PC-3 (cell line): ENCODE measurements at regions of chr6 and their contacts with region 1.

Region 1: DNA sequence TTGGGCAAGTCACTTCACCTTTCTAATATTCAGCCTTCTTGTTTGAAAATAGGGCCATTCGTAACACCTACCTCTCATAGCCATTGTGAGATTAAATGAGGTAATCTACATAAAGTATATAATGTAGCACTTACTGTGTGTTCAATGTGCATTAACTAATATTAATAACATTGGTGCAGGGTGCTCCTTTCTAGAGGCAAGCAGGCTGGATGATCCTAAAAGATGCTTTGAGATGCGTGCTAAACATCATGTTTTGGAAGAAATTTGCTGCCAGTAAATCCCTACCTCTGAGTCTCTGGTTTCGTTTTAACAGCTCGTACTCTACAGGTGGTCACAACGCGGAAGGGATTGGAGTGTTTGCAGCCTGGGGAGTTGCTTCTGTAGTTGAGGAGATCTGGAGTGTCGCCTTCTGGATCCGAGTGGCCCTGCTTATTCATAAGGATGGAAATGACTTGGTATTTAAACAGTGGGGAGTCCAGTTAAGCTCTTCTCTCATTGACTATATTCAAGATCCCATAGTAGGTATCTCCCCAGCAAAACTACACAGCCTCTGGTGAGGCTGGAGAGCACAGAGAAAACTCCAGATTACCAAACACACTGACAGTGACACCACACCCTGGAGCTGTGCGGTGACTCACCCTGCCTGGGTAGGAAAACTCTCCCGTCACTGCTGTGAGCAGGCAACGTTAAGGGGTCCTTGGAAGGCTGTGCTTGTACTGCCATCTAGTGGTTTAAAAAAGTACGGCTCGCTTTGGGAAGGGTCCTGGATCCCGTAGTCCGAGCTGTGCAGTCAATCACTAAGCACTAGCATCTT is 107.9 kb downstream of the MAP3K7 start:
- DNase-seq: peak; percentile 94
- ATAC-seq: peak; percentile 99
- H3K4me3 ChIP-seq: no peak overlapping the region
- H3K27ac ChIP-seq: peak overlapping the region; percentile 48
- H3K4me1 ChIP-seq: peaks cover 13% of the 10 kb centered on the region
- H3K27me3 ChIP-seq: no peaks in the 10 kb centered on the region
- CTCF ChIP-seq: peak; percentile 82

Region 2: GRCh38 chr6:89940225-89941027 is 538.6 kb before region 1 on chr6:
- CTCF ChIA-PET with region 1: interaction called, 25 read pairs
- POLR2A ChIA-PET with region 1: no interaction called
- intact Hi-C with region 1: loop called (anchors 1 kb)
- DNase-seq: peak; percentile 78
- ATAC-seq: peak; percentile 83
- H3K4me3 ChIP-seq: no peak overlapping the region
- H3K27ac ChIP-seq: no peak overlapping the region
- H3K4me1 ChIP-seq: peaks cover 13% of the 10 kb centered on the region
- H3K27me3 ChIP-seq: no peaks in the 10 kb centered on the region
- CTCF ChIP-seq: peak; percentile 75

Region 3: GRCh38 chr6:89977808-89978748 is 500.9 kb before region 1 on chr6:
- CTCF ChIA-PET with region 1: interaction called, 17 read pairs
- POLR2A ChIA-PET with region 1: no interaction called
- intact Hi-C with region 1: no loop called
- DNase-seq: no peak
- ATAC-seq: no peak
- H3K4me3 ChIP-seq: no peak overlapping the region
- H3K27ac ChIP-seq: no peak overlapping the region
- H3K4me1 ChIP-seq: no peaks in the 10 kb centered on the region
- H3K27me3 ChIP-seq: no peaks in the 10 kb centered on the region
- CTCF ChIP-seq: no peak

Region 4: GRCh38 chr6:90216072-90216977 is 262.7 kb before region 1 on chr6:
- CTCF ChIA-PET with region 1: no interaction called
- POLR2A ChIA-PET with region 1: no interaction called
- intact Hi-C with region 1: loop called (anchors 5 kb)
- DNase-seq: no peak
- ATAC-seq: no peak
- H3K4me3 ChIP-seq: no peak overlapping the region
- H3K27ac ChIP-seq: no peak overlapping the region
- H3K4me1 ChIP-seq: peaks cover 52% of the 10 kb centered on the region
- H3K27me3 ChIP-seq: no peaks in the 10 kb centered on the region
- CTCF ChIP-seq: no peak

Region 5: DNA sequence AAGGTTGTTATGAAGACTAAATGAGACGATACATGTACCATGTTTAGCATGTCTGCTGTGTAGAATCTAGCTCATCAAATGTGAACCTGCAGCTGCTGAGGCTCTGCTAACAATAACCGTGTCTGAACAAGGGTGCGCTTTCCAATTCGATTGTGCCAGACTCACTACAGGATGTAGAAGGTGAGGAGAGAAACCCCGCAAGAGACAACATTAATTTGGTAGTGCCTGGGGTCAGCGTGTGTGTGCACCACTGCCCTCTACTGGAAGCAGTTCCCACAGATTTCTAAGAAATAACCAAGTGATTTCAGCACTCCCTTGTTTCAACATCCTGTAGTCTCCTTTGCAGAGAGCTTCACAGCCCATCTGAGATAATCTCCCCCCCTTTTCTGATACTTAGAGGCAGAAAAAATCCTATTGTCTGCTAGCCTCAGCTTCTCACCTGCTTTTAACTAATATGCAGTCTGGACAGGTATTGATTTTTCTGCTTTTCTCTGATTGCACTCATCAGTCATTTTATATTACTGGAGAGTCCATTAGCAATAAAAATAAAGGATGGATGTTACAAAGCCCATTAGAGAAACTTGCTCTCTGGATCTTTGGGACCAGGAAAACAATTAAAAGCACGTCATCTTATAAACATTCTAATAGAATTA is 85.6 kb before region 1 on chr6:
- CTCF ChIA-PET with region 1: no interaction called
- POLR2A ChIA-PET with region 1: no interaction called
- intact Hi-C with region 1: loop called (anchors 2 kb)
- DNase-seq: peak; percentile 69
- ATAC-seq: peak; percentile 62
- H3K4me3 ChIP-seq: no peak overlapping the region
- H3K27ac ChIP-seq: no peak overlapping the region
- H3K4me1 ChIP-seq: peaks cover 16% of the 10 kb centered on the region
- H3K27me3 ChIP-seq: no peaks in the 10 kb centered on the region
- CTCF ChIP-seq: peak; percentile 75

Region 6: GRCh38 chr6:90572856-90573255 is 93.9 kb after region 1 on chr6:
- CTCF ChIA-PET with region 1: no interaction called
- POLR2A ChIA-PET with region 1: no interaction called
- intact Hi-C with region 1: no loop called
- DNase-seq: no peak
- ATAC-seq: no peak
- H3K4me3 ChIP-seq: no peak overlapping the region
- H3K27ac ChIP-seq: no peak overlapping the region
- H3K4me1 ChIP-seq: no peaks in the 10 kb centered on the region
- H3K27me3 ChIP-seq: no peaks in the 10 kb centered on the region
- CTCF ChIP-seq: no peak

Region 7: GRCh38 chr6:90651641-90652040 is 172.6 kb after region 1 on chr6:
- CTCF ChIA-PET with region 1: no interaction called
- POLR2A ChIA-PET with region 1: no interaction called
- intact Hi-C with region 1: no loop called
- DNase-seq: no peak
- ATAC-seq: no peak
- H3K4me3 ChIP-seq: no peak overlapping the region
- H3K27ac ChIP-seq: no peak overlapping the region
- H3K4me1 ChIP-seq: peaks cover 9% of the 10 kb centered on the region
- H3K27me3 ChIP-seq: peaks cover 18% of the 10 kb centered on the region
- CTCF ChIP-seq: no peak